Heart right ventricle (tissue), 16 donors: ENCODE measurements at regions of chr17 and their contacts with region 1.

Region 1: DNA sequence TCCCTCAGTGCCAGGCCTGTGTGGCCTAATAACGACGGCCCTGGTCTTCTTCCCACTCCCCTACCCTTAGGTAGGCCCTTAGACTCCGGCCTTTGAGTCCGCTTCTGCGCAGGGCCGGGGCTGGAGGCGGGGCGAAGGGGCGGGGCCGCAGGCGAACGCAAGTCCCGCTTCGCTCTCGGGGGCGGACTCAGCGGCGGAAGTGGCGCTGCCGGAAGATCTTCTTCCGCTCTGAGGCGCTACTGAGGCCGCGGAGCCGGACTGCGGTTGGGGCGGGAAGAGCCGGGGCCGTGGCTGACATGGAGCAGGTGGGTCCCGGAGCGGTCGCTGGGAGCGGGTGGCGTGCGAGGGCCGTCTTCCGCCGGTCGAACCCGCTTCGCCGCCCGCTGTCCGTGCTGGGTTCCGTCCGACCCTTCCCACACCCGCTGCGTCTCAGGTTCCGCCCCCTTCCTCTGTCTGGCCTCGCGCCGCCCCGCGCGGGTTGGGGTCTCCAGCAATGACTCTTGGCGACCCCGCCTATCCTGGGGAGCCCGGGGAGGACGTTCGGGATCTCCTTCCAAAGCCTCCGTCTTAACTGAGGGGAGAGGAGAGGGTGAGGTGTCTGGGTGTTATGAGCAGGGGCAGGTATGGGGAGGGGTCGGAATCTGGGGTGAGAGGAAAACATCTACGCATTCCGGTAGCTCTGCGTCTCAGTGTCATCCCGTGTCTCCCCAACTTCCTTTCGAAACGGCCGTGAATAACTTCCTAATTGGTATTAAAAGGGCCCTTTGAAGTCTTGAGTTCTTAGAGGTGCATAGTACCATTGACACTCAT is at the start of gene STARD3:
- DNase-seq: peak; percentile 93 to 94
- ATAC-seq: peak; percentile 94 to 98 (median 96)
- H3K4me3 ChIP-seq: peak within 1 kb of the TSS; percentile 56 to 98 (median 82)
- H3K27ac ChIP-seq: peak within 1 kb of the TSS; percentile 62 to 99 (median 92)
- H3K4me1 ChIP-seq: peaks cover 11 to 73% (median 55%) of the 10 kb centered on the region in 9 donors
- H3K27me3 ChIP-seq: peaks cover 0 to 3% (median 0%) of the 10 kb centered on the region in 7 donors
- CTCF ChIP-seq: peak in 5 of 9 donors; percentile 19 to 46 (median 31)
- total RNA-seq, gene STARD3: 14.2 to 25.3 (median 19.6) TPM

Region 2: GRCh38 chr17:39668199-39668966 is 31.3 kb after region 1 on chr17 and contains the start of gene PNMT:
- intact Hi-C with region 1: loop called in 3 of 10 experiments (anchors 2 to 5 kb)
- DNase-seq: peak; percentile 68 to 83
- ATAC-seq: peak in 3 of 8 donors; percentile 2 to 31 (median 6)
- H3K4me3 ChIP-seq: peak within 1 kb of the TSS; percentile 24 to 77 (median 52)
- H3K27ac ChIP-seq: peak within 1 kb of the TSS; percentile 88 to 98 (median 94)
- H3K4me1 ChIP-seq: peaks cover 25 to 78% (median 51%) of the 10 kb centered on the region in 9 donors
- H3K27me3 ChIP-seq: peaks cover 0 to 59% (median 8%) of the 10 kb centered on the region in 7 donors
- CTCF ChIP-seq: peak; percentile 52 to 81 (median 65)
- total RNA-seq, gene PNMT: 2.7 to 12.8 (median 3.9) TPM

Region 3: GRCh38 chr17:39687811-39688518 is 50.8 kb after region 1 on chr17 and contains the start of gene PGAP3:
- intact Hi-C with region 1: no loop called
- DNase-seq: peak; percentile 89
- ATAC-seq: peak; percentile 95 to 96 (median 95)
- H3K4me3 ChIP-seq: peak within 1 kb of the TSS; percentile 62 to 90 (median 68)
- H3K27ac ChIP-seq: peak within 1 kb of the TSS; percentile 88 to 98 (median 94)
- H3K4me1 ChIP-seq: peaks cover 2 to 19% (median 14%) of the 10 kb centered on the region in 9 donors
- H3K27me3 ChIP-seq: no peaks in the 10 kb centered on the region
- CTCF ChIP-seq: peak in 2 of 9 donors; percentile 16 to 22
- total RNA-seq, gene PGAP3: 9.2 to 18.2 (median 13.8) TPM

Region 4: GRCh38 chr17:39744836-39745672 is 107.9 kb after region 1 on chr17:
- intact Hi-C with region 1: loop called in 4 of 10 experiments (anchors 5 kb)
- DNase-seq: no peak
- ATAC-seq: no peak
- H3K4me3 ChIP-seq: no peak overlapping the region
- H3K27ac ChIP-seq: no peak overlapping the region
- H3K4me1 ChIP-seq: peaks cover 0 to 19% (median 13%) of the 10 kb centered on the region in 9 donors
- H3K27me3 ChIP-seq: peaks cover 0 to 41% (median 35%) of the 10 kb centered on the region in 7 donors
- CTCF ChIP-seq: no peak